WTC11 (cell line): ENCODE measurements at regions of chr17 and their contacts with region 1.

Region 1: DNA sequence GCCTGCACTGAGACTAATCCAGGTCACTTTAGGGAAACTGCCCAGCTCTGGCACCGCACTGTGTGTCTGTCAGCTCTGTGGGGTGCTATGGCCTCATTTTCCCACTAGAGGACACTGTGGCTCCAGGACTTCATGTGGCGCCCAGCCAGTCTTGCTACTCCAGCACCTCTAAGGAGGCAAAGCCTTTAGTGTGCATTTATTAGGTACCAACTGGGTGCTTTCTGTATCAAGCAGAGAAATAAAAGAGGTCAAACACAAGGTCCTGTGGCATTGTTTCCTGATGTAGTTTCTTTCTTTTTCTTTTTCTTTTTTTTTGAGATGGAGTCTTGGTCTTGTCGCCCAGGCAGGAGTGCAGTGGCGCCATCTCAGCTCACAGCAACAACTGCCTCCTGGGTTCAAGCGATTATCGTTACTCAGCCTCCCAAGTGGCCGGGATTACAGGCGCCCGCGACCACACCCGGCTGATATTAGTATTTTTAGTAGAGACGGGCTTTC is 12.5 kb upstream of the RHBDL3 start:
- DNase-seq: peak; percentile 90
- ATAC-seq: peak; percentile 99
- H3K4me3 Mint-ChIP-seq: no peak overlapping the region
- H3K27ac Mint-ChIP-seq: no peak overlapping the region
- H3K4me1 Mint-ChIP-seq: peaks cover 11% of the 10 kb centered on the region
- H3K27me3 Mint-ChIP-seq: no peaks in the 10 kb centered on the region
- CTCF ChIP-seq: peak; percentile 96

Region 2: DNA sequence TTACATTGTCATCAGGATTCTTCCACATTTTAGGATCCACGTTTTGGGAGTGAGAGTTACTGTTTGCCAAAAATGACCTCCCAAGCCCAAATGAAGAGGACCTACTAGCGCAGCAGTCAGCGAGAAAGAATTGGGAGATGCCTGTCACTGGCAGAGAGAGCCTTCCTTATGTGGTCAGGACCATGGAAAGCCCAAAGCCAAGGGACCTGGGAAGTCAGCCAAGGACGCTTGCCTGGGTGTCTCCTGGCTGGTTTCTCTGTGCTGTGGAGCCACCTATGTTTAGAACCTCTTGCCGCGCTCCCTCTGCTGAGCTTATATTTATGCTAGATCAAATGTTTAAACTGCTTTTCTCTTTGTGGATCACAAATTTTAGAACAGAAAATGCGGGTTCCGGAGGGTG is 12.4 kb before region 1 on chr17:
- CTCF ChIA-PET with region 1: interaction called, 14 read pairs
- POLR2A ChIA-PET with region 1: interaction called, 3 read pairs
- DNase-seq: no peak
- ATAC-seq: peak; percentile 70
- H3K4me3 Mint-ChIP-seq: no peak overlapping the region
- H3K27ac Mint-ChIP-seq: no peak overlapping the region
- H3K4me1 Mint-ChIP-seq: peaks cover 11% of the 10 kb centered on the region; the same call in 1 of the 2 replicates
- H3K27me3 Mint-ChIP-seq: no peaks in the 10 kb centered on the region; the same call in 1 of the 2 replicates
- CTCF ChIP-seq: no peak

Region 3: GRCh38 chr17:32275060-32276042 is 22.2 kb after region 1 on chr17:
- CTCF ChIA-PET with region 1: interaction called, 28 read pairs
- POLR2A ChIA-PET with region 1: interaction called, 3 read pairs
- DNase-seq: peak; percentile 54
- ATAC-seq: peak; percentile 32
- H3K4me3 Mint-ChIP-seq: no peak overlapping the region
- H3K27ac Mint-ChIP-seq: no peak overlapping the region
- H3K4me1 Mint-ChIP-seq: peaks cover 64% of the 10 kb centered on the region
- H3K27me3 Mint-ChIP-seq: peaks cover 7% of the 10 kb centered on the region
- CTCF ChIP-seq: no peak

Region 4: DNA sequence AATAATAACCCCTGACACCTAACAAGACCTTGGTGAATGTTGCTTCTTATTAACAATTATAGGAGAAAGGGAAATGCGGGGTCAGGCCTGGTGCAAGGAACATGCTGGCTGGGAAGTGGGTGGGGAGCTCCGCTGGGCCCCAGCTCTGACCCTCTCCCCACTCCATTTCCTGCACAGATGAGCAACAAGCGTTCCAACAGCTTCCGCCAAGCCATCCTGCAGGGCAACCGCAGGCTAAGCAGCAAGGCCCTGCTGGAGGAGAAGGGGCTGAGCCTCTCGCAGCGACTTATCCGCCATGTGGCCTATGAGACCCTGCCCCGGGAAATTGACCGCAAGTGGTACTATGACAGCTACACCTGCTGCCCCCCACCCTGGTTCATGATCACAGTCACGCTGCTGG is 35.5 kb after region 1 on chr17:
- CTCF ChIA-PET with region 1: interaction called, 10 read pairs
- POLR2A ChIA-PET with region 1: no interaction called
- DNase-seq: no peak
- ATAC-seq: peak; percentile 7; the same call in 1 of the 2 replicates
- H3K4me3 Mint-ChIP-seq: peak overlapping the region; percentile 13; the same call in 1 of the 2 replicates
- H3K27ac Mint-ChIP-seq: peak overlapping the region; percentile 96
- H3K4me1 Mint-ChIP-seq: peaks cover 62% of the 10 kb centered on the region
- H3K27me3 Mint-ChIP-seq: no peaks in the 10 kb centered on the region; the same call in 1 of the 2 replicates
- CTCF ChIP-seq: no peak

Region 5: DNA sequence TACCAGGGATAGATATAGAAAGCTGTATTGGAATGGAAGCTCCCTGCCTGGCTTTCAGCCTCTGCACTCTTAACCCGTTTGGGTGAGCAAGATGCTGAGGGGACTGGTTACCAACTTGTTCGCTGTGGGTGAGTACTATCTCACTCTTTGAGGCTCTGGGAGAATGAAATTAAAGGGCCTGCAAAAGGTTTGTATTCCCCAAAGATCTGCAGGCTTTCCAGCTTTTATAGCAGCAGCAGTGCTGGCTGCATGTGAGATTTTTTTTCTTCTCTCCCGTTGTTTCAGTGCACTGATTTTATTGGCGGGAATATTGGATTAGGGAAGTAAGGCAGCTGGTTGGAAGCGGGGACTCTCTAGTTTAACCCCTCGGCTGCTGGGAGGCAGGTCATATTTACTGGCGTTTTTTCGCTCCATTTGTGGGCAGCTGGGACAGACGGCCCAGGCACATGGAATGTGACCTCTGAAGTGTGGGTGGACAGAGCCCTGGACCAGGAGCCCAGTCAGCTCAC is 57.9 kb after region 1 on chr17:
- CTCF ChIA-PET with region 1: interaction called, 23 read pairs
- POLR2A ChIA-PET with region 1: interaction called, 7 read pairs
- DNase-seq: no peak
- ATAC-seq: peak; percentile 50
- H3K4me3 Mint-ChIP-seq: peak overlapping the region; percentile 36; the same call in 1 of the 2 replicates
- H3K27ac Mint-ChIP-seq: 0 out of 2 replicates have a peak overlapping the region, but pooled peaks have one; percentile 16
- H3K4me1 Mint-ChIP-seq: peaks cover 42% of the 10 kb centered on the region
- H3K27me3 Mint-ChIP-seq: no peaks in the 10 kb centered on the region
- CTCF ChIP-seq: no peak

Region 6: DNA sequence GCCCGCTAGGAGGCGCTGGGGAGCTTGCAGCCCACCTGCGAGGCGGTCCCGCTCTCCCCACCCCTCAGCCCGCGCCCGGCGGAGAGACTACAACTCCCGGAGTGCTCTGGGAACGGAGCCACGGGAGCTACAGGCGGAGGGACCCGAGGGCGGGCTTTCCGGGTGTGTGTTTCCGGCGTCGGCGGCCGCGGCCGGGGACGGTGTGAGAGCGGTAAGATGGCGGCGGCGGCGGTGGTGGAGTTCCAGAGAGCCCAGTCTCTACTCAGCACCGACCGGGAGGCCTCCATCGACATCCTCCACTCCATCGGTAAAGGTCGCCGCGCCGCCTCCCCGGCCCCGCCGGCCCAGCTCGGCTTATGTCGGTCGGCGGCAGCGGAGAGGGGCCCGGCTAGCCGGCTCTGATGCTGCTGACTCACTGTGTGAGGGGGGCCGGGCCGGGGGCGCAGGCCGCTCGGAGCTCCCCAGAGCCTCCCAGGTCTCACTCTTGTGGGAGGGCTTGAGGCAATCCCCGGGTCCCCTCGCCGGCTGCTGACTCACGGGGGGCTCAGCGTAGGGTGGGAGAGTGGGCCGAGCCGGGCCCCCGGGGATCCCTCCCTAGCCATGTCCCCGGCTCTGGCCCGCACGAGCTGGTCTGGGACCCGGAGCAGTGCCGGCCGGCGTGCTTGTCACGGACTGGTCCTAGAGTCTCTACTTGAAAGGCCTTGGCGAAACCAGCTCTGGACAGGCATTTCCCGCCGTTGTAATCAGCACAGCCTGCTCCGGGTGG is 191.3 kb after region 1 on chr17 and contains the start of gene PSMD11:
- CTCF ChIA-PET with region 1: interaction called, 17 read pairs
- POLR2A ChIA-PET with region 1: no interaction called
- DNase-seq: peak; percentile 99
- ATAC-seq: peak; percentile 99
- H3K4me3 Mint-ChIP-seq: peak within 1 kb of the TSS; percentile 95
- H3K27ac Mint-ChIP-seq: peak within 1 kb of the TSS; percentile 41
- H3K4me1 Mint-ChIP-seq: peaks cover 19% of the 10 kb centered on the region
- H3K27me3 Mint-ChIP-seq: peaks cover 29% of the 10 kb centered on the region
- CTCF ChIP-seq: no peak; the same call in none of the 2 replicates
- total RNA-seq, gene PSMD11: 133 to 155 TPM (median 146 TPM) in 3 replicates

Region 7: GRCh38 chr17:32569171-32570080 is 316.3 kb after region 1 on chr17:
- CTCF ChIA-PET with region 1: no interaction called
- POLR2A ChIA-PET with region 1: no interaction called
- DNase-seq: no peak
- ATAC-seq: peak; percentile 46; the same call in 1 of the 2 replicates
- H3K4me3 Mint-ChIP-seq: no peak overlapping the region
- H3K27ac Mint-ChIP-seq: no peak overlapping the region
- H3K4me1 Mint-ChIP-seq: peaks cover 10% of the 10 kb centered on the region
- H3K27me3 Mint-ChIP-seq: no peaks in the 10 kb centered on the region
- CTCF ChIP-seq: no peak